IMR-90 (cell line): ENCODE measurements at regions of chr2 and their contacts with region 1.

Region 1: GRCh38 chr2:80326214-80326613 is 21.7 kb upstream of the LRRTM1 start:
- DNase-seq: peak; percentile 19
- ATAC-seq: 0 out of 2 replicates have a peak, but pooled peaks have one; percentile 29
- H3K4me3 ChIP-seq: no peak overlapping the region
- H3K27ac ChIP-seq: no peak overlapping the region
- H3K4me1 ChIP-seq: no peaks in the 10 kb centered on the region
- H3K27me3 ChIP-seq: peaks cover 11% of the 10 kb centered on the region
- CTCF ChIP-seq: peak; percentile 40
- POLR2A ChIP-seq: no peak
- RAD21 ChIP-seq: peak; percentile 46

Region 2: DNA sequence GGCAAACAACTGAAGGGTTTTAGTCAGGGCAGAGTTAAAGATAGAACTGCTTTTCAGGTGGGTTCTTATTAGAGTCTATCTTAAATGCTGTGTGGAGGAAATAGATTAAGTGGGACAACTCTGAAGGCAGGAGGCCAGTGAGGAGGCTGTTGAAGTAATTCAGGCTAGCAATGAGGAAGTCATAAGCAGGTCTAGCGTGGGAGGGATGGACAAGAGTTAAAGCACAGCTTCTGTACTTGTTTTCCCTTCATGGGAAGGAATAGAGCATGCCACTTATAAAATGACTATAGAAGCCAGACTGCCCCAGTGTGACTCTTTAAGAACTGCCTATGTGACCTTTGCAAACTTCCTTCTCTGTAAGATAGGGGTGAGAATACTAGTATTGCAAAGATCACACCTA is 180.3 kb after region 1 on chr2:
- CTCF ChIA-PET with region 1: no interaction called
- POLR2A ChIA-PET with region 1: no interaction called
- dilution Hi-C with region 1: no loop called
- in situ Hi-C with region 1: loop called (anchors 10 kb)
- intact Hi-C with region 1: no loop called
- DNase-seq: no peak
- ATAC-seq: no peak
- H3K4me3 ChIP-seq: no peak overlapping the region
- H3K27ac ChIP-seq: no peak overlapping the region
- H3K4me1 ChIP-seq: no peaks in the 10 kb centered on the region
- H3K27me3 ChIP-seq: no peaks in the 10 kb centered on the region; the same call in 1 of the 2 replicates
- CTCF ChIP-seq: no peak
- POLR2A ChIP-seq: no peak
- RAD21 ChIP-seq: no peak